ENCODE measurements at regions of chr16 and their contacts with region 1.

Region 1: DNA sequence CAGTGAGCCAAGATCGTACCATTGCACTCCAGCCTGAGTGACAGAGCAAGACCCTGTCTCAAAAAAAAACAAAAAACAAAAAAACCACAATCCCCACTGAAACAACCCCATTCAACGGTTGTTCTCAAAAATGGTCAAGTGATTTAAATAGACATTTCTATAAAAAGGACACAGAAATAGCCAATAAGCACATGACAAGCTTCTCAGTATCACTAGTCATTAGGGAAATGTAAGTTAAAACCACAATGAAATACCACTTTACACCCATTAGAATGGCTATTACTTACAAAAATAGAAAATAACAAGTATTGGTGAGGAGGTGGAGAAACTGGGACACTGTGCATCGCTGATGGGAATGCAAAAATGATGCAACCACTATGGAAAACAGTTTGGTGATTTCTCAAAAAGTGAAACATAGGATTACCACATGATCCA is 26.6 kb upstream of the MYLK3 start:
- DNase-seq: no peak
- ATAC-seq: no peak
- H3K4me3 ChIP-seq: no peak overlapping the region
- H3K4me3 Mint-ChIP-seq: no peak overlapping the region
- H3K27ac ChIP-seq: no peak overlapping the region
- H3K27ac Mint-ChIP-seq: no peak overlapping the region
- H3K4me1 ChIP-seq: no peaks in the 10 kb centered on the region
- H3K4me1 Mint-ChIP-seq: no peaks in the 10 kb centered on the region
- H3K27me3 ChIP-seq: no peaks in the 10 kb centered on the region
- H3K27me3 Mint-ChIP-seq: no peaks in the 10 kb centered on the region
- CTCF ChIP-seq: no peak

Region 2: GRCh38 chr16:46709469-46710005 is 65.2 kb before region 1 on chr16:
- CTCF ChIA-PET with region 1: no interaction called
- POLR2A ChIA-PET with region 1: no interaction called
- intact Hi-C with region 1: loop called in 1 of 2 experiments (anchors 5 kb)
- DNase-seq: peak in 1 of 14 experiments; percentile 22
- ATAC-seq: no peak
- H3K4me3 ChIP-seq: no peak overlapping the region
- H3K4me3 Mint-ChIP-seq: no peak overlapping the region
- H3K27ac ChIP-seq: no peak overlapping the region
- H3K27ac Mint-ChIP-seq: no peak overlapping the region
- H3K4me1 ChIP-seq: peaks cover 2% of the 10 kb centered on the region
- H3K4me1 Mint-ChIP-seq: no peaks in the 10 kb centered on the region
- H3K27me3 ChIP-seq: no peaks in the 10 kb centered on the region
- H3K27me3 Mint-ChIP-seq: no peaks in the 10 kb centered on the region
- CTCF ChIP-seq: no peak

Measured in CD4-positive, alpha-beta T cell (primary cell).